ENCODE measurements at regions of chr12 and their contacts with region 1.

Region 1: DNA sequence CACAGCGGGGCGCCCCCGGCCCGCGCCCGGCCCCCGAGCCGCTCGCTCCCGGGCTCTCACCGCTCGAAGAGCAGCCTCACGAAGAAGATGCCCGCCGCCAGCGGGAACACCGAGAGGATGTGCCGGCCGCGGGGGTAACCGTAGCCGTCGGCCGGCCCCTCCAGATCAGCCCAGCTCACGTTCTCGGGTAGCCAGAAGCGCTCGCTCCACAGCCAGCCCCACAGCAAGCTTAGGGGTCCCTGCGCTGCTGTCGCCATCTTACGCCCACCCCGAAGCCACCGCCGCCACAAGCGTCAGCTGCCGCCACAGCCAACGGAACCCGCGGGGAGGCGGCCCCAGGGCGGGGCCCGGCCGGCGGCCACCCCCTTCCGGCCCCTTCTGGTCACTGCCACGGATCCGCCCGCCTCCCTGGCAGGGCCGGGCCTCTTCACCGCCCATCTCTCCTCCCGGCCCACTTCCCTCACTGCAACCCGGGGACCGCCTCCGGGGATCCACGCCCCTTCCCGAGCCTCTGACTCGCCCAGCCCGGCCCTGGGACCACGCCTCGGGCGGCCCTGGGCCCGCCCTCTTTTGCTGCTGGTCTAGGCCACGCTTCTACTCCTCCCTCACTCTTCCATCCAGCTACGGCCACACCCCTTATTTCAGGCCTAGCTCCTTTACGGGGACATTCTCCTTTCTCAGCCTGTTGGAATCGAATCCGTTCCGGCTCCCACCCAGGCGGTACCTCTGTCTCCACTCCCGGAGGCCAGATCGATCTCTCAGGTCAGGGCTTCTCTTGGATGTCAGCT is at the start of gene CERS5:
- DNase-seq: peak; percentile 99
- ATAC-seq: peak; percentile 99
- H3K4me3 ChIP-seq: peak within 1 kb of the TSS; percentile 46 to 73
- H3K27ac ChIP-seq: peak within 1 kb of the TSS; percentile 29 to 65
- H3K4me1 ChIP-seq: no peaks in the 10 kb centered on the region
- H3K27me3 ChIP-seq: no peaks in the 10 kb centered on the region
- total RNA-seq, gene CERS5: 62.8 to 66.6 TPM

Region 2: GRCh38 chr12:50111693-50112455 is 55.4 kb before region 1 on chr12 and contains the start of gene COX14:
- intact Hi-C with region 1: loop called (anchors 1 kb)
- DNase-seq: peak; percentile 99
- ATAC-seq: peak; percentile 96
- H3K4me3 ChIP-seq: peak within 1 kb of the TSS; percentile 45 to 68
- H3K27ac ChIP-seq: peak within 1 kb of the TSS; percentile 87 to 94
- H3K4me1 ChIP-seq: peaks cover 0 to 2% of the 10 kb centered on the region in 2 donors
- H3K27me3 ChIP-seq: no peaks in the 10 kb centered on the region
- total RNA-seq, gene COX14: 49.3 to 52.7 TPM

Region 3: GRCh38 chr12:50132505-50133135 is 34.6 kb before region 1 on chr12:
- intact Hi-C with region 1: loop called (anchors 5 kb)
- DNase-seq: no peak
- ATAC-seq: no peak
- H3K4me3 ChIP-seq: no peak overlapping the region
- H3K27ac ChIP-seq: peak overlapping the region; percentile 34 to 64
- H3K4me1 ChIP-seq: peaks cover 0 to 2% of the 10 kb centered on the region in 2 donors
- H3K27me3 ChIP-seq: no peaks in the 10 kb centered on the region

Region 4: GRCh38 chr12:50211392-50212070 is 44.3 kb after region 1 on chr12:
- intact Hi-C with region 1: no loop called
- DNase-seq: no peak
- ATAC-seq: no peak
- H3K4me3 ChIP-seq: no peak overlapping the region
- H3K27ac ChIP-seq: no peak overlapping the region
- H3K4me1 ChIP-seq: peaks cover 0 to under 1% of the 10 kb centered on the region in 2 donors
- H3K27me3 ChIP-seq: no peaks in the 10 kb centered on the region

Measured in aorta (tissue), 5 donors.